ENCODE measurements at regions of chr9 and their contacts with region 1.

Region 1: GRCh38 chr9:4382722-4383317 is 83.0 kb upstream of the GLIS3 start:
- DNase-seq: no peak

Region 2: DNA sequence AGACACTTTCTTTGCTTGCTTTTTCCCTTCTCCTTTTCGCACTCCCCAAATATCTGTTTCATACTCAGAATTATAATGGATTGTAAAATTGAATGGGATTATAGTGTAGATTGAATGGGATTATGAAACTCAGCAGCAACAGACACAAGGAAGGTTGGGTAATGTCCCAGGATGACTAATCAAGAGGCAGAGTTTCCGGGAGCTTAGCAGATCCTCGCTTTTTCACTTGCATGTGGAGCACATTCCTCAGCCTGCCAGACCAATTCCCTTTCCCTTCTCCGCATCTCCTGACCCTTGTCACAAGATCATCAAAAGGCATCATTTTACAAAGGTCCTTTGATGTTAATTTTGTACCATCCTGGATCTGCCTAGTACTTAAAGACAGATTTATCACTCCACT is 52.4 kb after region 1 on chr9:
- intact Hi-C with region 1: no loop called
- DNase-seq: no peak

Region 3: DNA sequence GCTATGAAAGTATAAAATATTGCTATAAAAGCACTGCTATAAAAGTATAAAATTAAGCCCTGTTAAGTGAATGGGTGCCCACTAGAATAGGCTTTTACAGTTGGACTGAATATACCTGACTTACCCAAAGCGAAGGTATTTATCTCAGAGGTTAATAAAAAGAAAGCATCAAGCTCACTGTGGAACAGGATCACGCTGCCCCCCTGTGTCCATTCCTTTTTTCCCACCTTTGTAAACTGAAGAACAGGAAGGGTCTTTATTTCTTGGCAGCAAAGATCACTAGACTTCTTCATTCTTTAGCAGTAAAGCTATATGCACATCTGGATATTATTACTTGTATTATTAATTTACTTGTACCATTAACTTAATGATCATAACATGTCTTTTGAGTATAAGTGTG is 257.2 kb after region 1 on chr9:
- intact Hi-C with region 1: loop called (anchors 5 kb)
- DNase-seq: no peak

Measured in cardiac septum (tissue), 1 donor.